ENCODE measurements at regions of chr11 and their contacts with region 1.

Region 1: GRCh38 chr11:62542750-62543567 is 3.6 kb downstream of the AHNAK start:
- DNase-seq: peak; percentile 61 to 63
- H3K4me3 ChIP-seq: peak overlapping the region in 1 of 3 donors; percentile 87
- H3K27ac ChIP-seq: peak overlapping the region; percentile 42 to 99 (median 92)
- H3K4me1 ChIP-seq: peaks cover 46 to 73% of the 10 kb centered on the region in 2 donors
- H3K27me3 ChIP-seq: no peaks in the 10 kb centered on the region
- CTCF ChIP-seq: peak; percentile 87 to 99 (median 96)
- POLR2A ChIP-seq: peak in 1 of 2 donors; percentile 13

Region 2: DNA sequence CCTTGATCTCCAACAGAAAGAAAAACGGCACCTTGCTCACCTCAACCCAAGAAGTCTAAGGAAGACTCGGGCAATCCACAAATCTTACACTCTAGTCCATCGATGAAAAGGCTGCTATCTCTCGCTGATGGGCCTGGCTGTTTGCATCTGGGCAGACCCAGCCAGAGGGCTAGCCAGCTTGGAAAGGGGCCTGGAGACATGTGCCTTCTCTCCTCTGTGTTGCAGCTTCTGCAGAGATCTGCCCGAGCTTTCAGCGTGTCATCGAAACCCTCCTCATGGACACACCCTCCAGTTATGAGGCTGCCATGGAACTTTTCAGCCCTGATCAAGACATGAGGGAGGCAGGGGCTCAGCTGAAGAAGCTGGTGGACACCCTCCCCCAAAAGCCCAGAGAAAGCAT is 121.0 kb before region 1 on chr11:
- intact Hi-C with region 1: loop called (anchors 5 kb)
- DNase-seq: no peak
- H3K4me3 ChIP-seq: no peak overlapping the region
- H3K27ac ChIP-seq: no peak overlapping the region
- H3K4me1 ChIP-seq: peaks cover 3 to 9% of the 10 kb centered on the region in 2 donors
- H3K27me3 ChIP-seq: no peaks in the 10 kb centered on the region
- CTCF ChIP-seq: no peak
- POLR2A ChIP-seq: no peak

Region 3: GRCh38 chr11:62508268-62509058 is 34.5 kb before region 1 on chr11:
- intact Hi-C with region 1: loop called (anchors 5 kb)
- DNase-seq: peak; percentile 94 to 96
- H3K4me3 ChIP-seq: no peak overlapping the region
- H3K27ac ChIP-seq: peak overlapping the region; percentile 82 to 86 (median 85)
- H3K4me1 ChIP-seq: peaks cover 31 to 52% of the 10 kb centered on the region in 2 donors
- H3K27me3 ChIP-seq: no peaks in the 10 kb centered on the region
- CTCF ChIP-seq: peak in 4 of 6 experiments; percentile 52 to 68 (median 60)
- POLR2A ChIP-seq: peak in 1 of 2 donors; percentile 52

Region 4: GRCh38 chr11:62652161-62653006 is 109.4 kb after region 1 on chr11:
- intact Hi-C with region 1: no loop called
- DNase-seq: no peak
- H3K4me3 ChIP-seq: peak overlapping the region; percentile 46 to 61 (median 60)
- H3K27ac ChIP-seq: peak overlapping the region; percentile 69 to 77 (median 76)
- H3K4me1 ChIP-seq: peaks cover 6 to 11% of the 10 kb centered on the region in 2 donors
- H3K27me3 ChIP-seq: no peaks in the 10 kb centered on the region
- CTCF ChIP-seq: no peak
- POLR2A ChIP-seq: no peak

Measured in thyroid gland (tissue), 4 donors.